Naive thymus-derived CD4-positive, alpha-beta T cell (primary cell): ENCODE measurements at regions of chr16 and their contacts with region 1.

Region 1: DNA sequence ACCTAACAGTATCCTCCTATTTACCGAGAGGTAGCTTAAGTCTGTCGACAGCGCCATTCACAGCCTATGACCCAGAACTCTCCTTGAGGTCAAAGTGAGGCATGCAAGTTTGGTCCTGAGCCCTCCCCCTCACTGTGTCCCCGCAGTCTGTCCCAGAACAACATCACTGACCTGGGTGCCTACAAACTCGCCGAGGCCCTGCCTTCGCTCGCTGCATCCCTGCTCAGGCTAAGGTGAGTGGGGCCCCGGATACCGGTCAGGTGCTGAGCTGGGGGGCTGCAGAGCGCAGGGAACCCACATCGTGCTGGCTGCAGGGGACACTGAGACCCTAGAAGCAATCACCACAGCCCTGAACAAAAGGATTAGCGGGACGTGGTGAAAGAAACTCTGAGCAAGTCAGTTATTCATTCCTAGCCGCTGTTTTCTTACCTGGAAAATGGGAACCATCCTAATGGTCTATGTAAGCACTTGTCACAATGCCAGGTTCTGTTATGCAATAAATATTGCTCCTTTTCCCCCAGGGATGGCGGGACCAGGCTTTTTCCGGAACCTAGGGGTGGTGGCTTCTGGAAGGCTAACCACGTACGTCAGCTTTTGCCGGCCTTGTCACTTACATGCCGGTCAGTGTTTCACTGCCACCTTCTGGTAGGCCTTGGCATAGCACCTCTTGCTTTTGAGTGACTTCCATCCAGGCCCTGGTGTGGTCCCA is 23.8 kb downstream of the DEXI start:
- DNase-seq: peak in 8 of 9 donors; percentile 44 to 83 (median 52)
- ATAC-seq: peak; percentile 90
- H3K4me3 ChIP-seq: no peak overlapping the region
- H3K4me3 Mint-ChIP-seq: peak overlapping the region in 2 of 10 donors; percentile 21 to 45
- H3K27ac ChIP-seq: no peak overlapping the region
- H3K27ac Mint-ChIP-seq: no peak overlapping the region
- H3K4me1 ChIP-seq: no peaks in the 10 kb centered on the region
- H3K4me1 Mint-ChIP-seq: peaks cover 0 to 12% (median 4%) of the 10 kb centered on the region in 7 donors
- H3K27me3 ChIP-seq: no peaks in the 10 kb centered on the region
- H3K27me3 Mint-ChIP-seq: no peaks in the 10 kb centered on the region

Region 2: DNA sequence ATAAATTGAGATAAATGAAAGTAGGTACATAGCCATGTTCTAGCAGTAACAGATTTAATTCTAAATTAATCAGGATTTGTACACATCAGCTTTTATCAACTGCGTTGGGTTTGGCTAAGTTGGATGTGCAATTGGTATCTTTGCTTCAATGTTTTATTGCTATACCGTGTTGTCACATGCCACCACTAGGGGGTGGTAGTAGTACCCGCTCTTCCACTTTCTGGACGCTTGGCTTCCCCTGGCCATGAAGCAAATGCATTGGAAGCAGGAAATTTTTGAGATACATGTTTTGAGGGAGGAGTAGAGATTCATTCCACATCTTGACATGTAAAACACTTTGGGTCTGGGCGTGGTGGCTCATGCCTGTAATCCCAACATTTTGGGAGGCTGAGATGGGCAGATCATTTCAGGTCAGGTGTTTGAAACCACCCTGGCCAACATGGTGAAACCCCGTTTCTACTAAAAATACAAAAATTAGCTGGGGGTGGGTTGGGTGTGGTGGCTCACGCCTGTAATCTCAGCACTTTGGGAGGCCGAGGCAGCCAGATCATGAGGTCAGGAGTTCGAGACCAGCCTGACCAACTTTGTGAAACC is 396.7 kb before region 1 on chr16:
- CTCF ChIA-PET with region 1: no interaction called
- POLR2A ChIA-PET with region 1: no interaction called
- intact Hi-C with region 1: loop called in 1 of 2 experiments (anchors 1 kb)
- DNase-seq: peak in 5 of 9 donors; percentile 19 to 31 (median 30)
- ATAC-seq: peak; percentile 76
- H3K4me3 ChIP-seq: no peak overlapping the region
- H3K4me3 Mint-ChIP-seq: no peak overlapping the region
- H3K27ac ChIP-seq: no peak overlapping the region
- H3K27ac Mint-ChIP-seq: no peak overlapping the region
- H3K4me1 ChIP-seq: no peaks in the 10 kb centered on the region
- H3K4me1 Mint-ChIP-seq: peaks cover 0 to 4% (median 3%) of the 10 kb centered on the region in 7 donors
- H3K27me3 ChIP-seq: no peaks in the 10 kb centered on the region
- H3K27me3 Mint-ChIP-seq: peaks cover 0 to 7% (median 4%) of the 10 kb centered on the region in 5 donors

Region 3: GRCh38 chr16:10708969-10709368 is 209.5 kb before region 1 on chr16:
- CTCF ChIA-PET with region 1: no interaction called
- POLR2A ChIA-PET with region 1: no interaction called
- intact Hi-C with region 1: no loop called
- DNase-seq: no peak
- ATAC-seq: no peak
- H3K4me3 ChIP-seq: no peak overlapping the region
- H3K4me3 Mint-ChIP-seq: no peak overlapping the region
- H3K27ac ChIP-seq: no peak overlapping the region
- H3K27ac Mint-ChIP-seq: no peak overlapping the region
- H3K4me1 ChIP-seq: no peaks in the 10 kb centered on the region
- H3K4me1 Mint-ChIP-seq: no peaks in the 10 kb centered on the region
- H3K27me3 ChIP-seq: no peaks in the 10 kb centered on the region
- H3K27me3 Mint-ChIP-seq: peaks cover 0 to 34% (median 26%) of the 10 kb centered on the region in 5 donors

Region 4: GRCh38 chr16:10770907-10771306 is 147.5 kb before region 1 on chr16:
- CTCF ChIA-PET with region 1: no interaction called
- POLR2A ChIA-PET with region 1: no interaction called
- intact Hi-C with region 1: loop called in 1 of 2 experiments (anchors 5 kb)
- DNase-seq: peak in 4 of 9 donors; percentile 3 to 21 (median 16)
- ATAC-seq: peak; percentile 62
- H3K4me3 ChIP-seq: no peak overlapping the region
- H3K4me3 Mint-ChIP-seq: peak overlapping the region in 1 of 10 donors; percentile 45
- H3K27ac ChIP-seq: no peak overlapping the region
- H3K27ac Mint-ChIP-seq: peak overlapping the region in 6 of 9 donors; percentile 10 to 79 (median 50)
- H3K4me1 ChIP-seq: peaks cover 0 to 7% of the 10 kb centered on the region in 2 donors
- H3K4me1 Mint-ChIP-seq: peaks cover 2 to 15% (median 12%) of the 10 kb centered on the region in 7 donors
- H3K27me3 ChIP-seq: no peaks in the 10 kb centered on the region
- H3K27me3 Mint-ChIP-seq: peaks cover 0 to 7% (median 0%) of the 10 kb centered on the region in 5 donors

Region 5: GRCh38 chr16:10876799-10877341 is 41.6 kb before region 1 on chr16 and contains the start of gene CIITA:
- CTCF ChIA-PET with region 1: no interaction called
- POLR2A ChIA-PET with region 1: no interaction called
- intact Hi-C with region 1: loop called in 1 of 2 experiments (anchors 1 kb)
- DNase-seq: peak in 2 of 9 donors; percentile 20 to 34
- ATAC-seq: peak; percentile 88
- H3K4me3 ChIP-seq: peak within 1 kb of the TSS; percentile 47
- H3K4me3 Mint-ChIP-seq: peak within 1 kb of the TSS; percentile 63 to 95 (median 86)
- H3K27ac ChIP-seq: no peak within 1 kb of the TSS
- H3K27ac Mint-ChIP-seq: peak within 1 kb of the TSS in 1 of 9 donors; percentile 68
- H3K4me1 ChIP-seq: peaks cover 0 to 51% of the 10 kb centered on the region in 2 donors
- H3K4me1 Mint-ChIP-seq: peaks cover 27 to 77% (median 40%) of the 10 kb centered on the region in 7 donors
- H3K27me3 ChIP-seq: peaks cover 0 to 4% of the 10 kb centered on the region in 2 donors
- H3K27me3 Mint-ChIP-seq: peaks cover 52 to 78% (median 60%) of the 10 kb centered on the region in 5 donors
- total RNA-seq, gene CIITA: 1.0 to 72.1 (median 6.7) TPM